Mammary epithelial cell (primary cell): ENCODE measurements at regions of chr3 and their contacts with region 1.

Region 1: GRCh38 chr3:196609343-196609775 is 30.1 kb upstream of the NRROS start:
- DNase-seq: peak; percentile 62
- H3K4me3 ChIP-seq: no peak overlapping the region
- H3K27ac ChIP-seq: no peak overlapping the region
- H3K4me1 ChIP-seq: peaks cover 8% of the 10 kb centered on the region
- H3K27me3 ChIP-seq: no peaks in the 10 kb centered on the region
- CTCF ChIP-seq: peak; percentile 57 to 95

Region 2: GRCh38 chr3:196537319-196537984 is 71.9 kb before region 1 on chr3:
- CTCF ChIA-PET with region 1: no interaction called
- dilution Hi-C with region 1: no loop called
- in situ Hi-C with region 1: no loop called
- intact Hi-C with region 1: loop called (anchors 5 kb)
- DNase-seq: peak; percentile 37
- H3K4me3 ChIP-seq: no peak overlapping the region
- H3K27ac ChIP-seq: no peak overlapping the region
- H3K4me1 ChIP-seq: no peaks in the 10 kb centered on the region
- H3K27me3 ChIP-seq: no peaks in the 10 kb centered on the region
- CTCF ChIP-seq: peak; percentile 55 to 67

Region 3: GRCh38 chr3:196639483-196640296 is 30.3 kb after region 1 on chr3 and contains the start of gene NRROS:
- CTCF ChIA-PET with region 1: interaction called, 6 read pairs
- dilution Hi-C with region 1: no loop called
- in situ Hi-C with region 1: no loop called
- intact Hi-C with region 1: loop called (anchors 2 kb)
- DNase-seq: peak; percentile 16
- H3K4me3 ChIP-seq: peak within 1 kb of the TSS; percentile 29 to 43 (median 42)
- H3K27ac ChIP-seq: no peak within 1 kb of the TSS
- H3K4me1 ChIP-seq: peaks cover 5% of the 10 kb centered on the region
- H3K27me3 ChIP-seq: peaks cover 4% of the 10 kb centered on the region
- CTCF ChIP-seq: no peak
- total RNA-seq, gene NRROS: 1.1 TPM in 1 of 2 donors, not detected in the other